T-cell (primary cell): ENCODE measurements at regions of chr19 and their contacts with region 1.

Region 1: GRCh38 chr19:39833464-39834286 is at the start of gene DYRK1B:
- DNase-seq: peak; percentile 95 to 99 (median 97)
- ATAC-seq: peak; percentile 91 to 93 (median 92)
- H3K4me3 ChIP-seq: peak within 1 kb of the TSS; percentile 76 to 99
- H3K4me3 Mint-ChIP-seq: peak within 1 kb of the TSS; percentile 75 to 84 (median 81)
- H3K27ac ChIP-seq: peak within 1 kb of the TSS; percentile 92
- H3K27ac Mint-ChIP-seq: peak within 1 kb of the TSS; percentile 85 to 92
- H3K4me1 ChIP-seq: peaks cover 11 to 44% of the 10 kb centered on the region in 2 experiments
- H3K4me1 Mint-ChIP-seq: peaks cover 30 to 36% (median 30%) of the 10 kb centered on the region in 3 donors
- H3K27me3 ChIP-seq: no peaks in the 10 kb centered on the region
- H3K27me3 Mint-ChIP-seq: no peaks in the 10 kb centered on the region
- total RNA-seq, gene DYRK1B: 18.9 to 38.4 (median 28.0) TPM

Region 2: GRCh38 chr19:38674388-38675171 is 1159.1 kb before region 1 on chr19:
- CTCF ChIA-PET with region 1: no interaction called
- POLR2A ChIA-PET with region 1: interaction called in 1 of 2 experiments, 11 read pairs
- DNase-seq: no peak
- ATAC-seq: no peak
- H3K4me3 ChIP-seq: no peak overlapping the region
- H3K4me3 Mint-ChIP-seq: peak overlapping the region in 1 of 3 donors; percentile 15
- H3K27ac ChIP-seq: no peak overlapping the region
- H3K27ac Mint-ChIP-seq: peak overlapping the region; percentile 51 to 60
- H3K4me1 ChIP-seq: peaks cover 11 to 67% of the 10 kb centered on the region in 2 experiments
- H3K4me1 Mint-ChIP-seq: peaks cover 67 to 84% (median 78%) of the 10 kb centered on the region in 3 donors
- H3K27me3 ChIP-seq: peaks cover 0 to 4% of the 10 kb centered on the region in 2 experiments
- H3K27me3 Mint-ChIP-seq: peaks cover 0 to 3% of the 10 kb centered on the region in 2 donors

Region 3: DNA sequence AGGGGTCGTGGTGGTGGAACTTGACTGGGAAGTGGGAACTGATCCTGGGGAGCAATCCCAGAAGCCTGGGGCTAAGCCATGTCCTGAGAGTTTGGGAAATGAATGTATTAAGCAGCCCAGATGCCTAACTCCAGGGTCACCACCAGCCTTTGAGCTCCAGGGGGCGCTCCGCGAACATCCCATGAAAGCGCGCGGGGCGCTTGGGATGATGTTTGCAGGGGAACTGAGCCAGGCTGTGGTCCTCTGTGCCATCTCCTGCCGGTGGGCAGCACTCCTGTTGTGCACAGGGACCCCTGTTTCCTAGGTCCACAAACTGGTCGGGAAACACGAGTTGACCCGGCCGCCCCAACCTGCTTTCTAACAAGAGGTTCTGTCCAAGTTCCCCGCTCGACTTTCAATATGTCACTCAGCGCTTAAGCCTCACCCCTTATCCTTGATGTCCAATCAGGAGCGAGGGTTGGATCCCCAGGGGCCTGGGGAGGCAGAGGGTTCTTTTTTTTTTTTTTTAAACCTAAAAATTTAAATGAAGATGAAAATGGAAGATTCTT is 40.6 kb before region 1 on chr19:
- CTCF ChIA-PET with region 1: interaction called in 1 of 2 experiments, 15 read pairs
- POLR2A ChIA-PET with region 1: interaction called in 1 of 2 experiments, 3 read pairs
- DNase-seq: peak; percentile 20 to 82 (median 64)
- ATAC-seq: peak; percentile 91 to 97 (median 93)
- H3K4me3 ChIP-seq: peak overlapping the region; percentile 55 to 66
- H3K4me3 Mint-ChIP-seq: peak overlapping the region; percentile 63 to 74 (median 66)
- H3K27ac ChIP-seq: no peak overlapping the region
- H3K27ac Mint-ChIP-seq: no peak overlapping the region
- H3K4me1 ChIP-seq: peaks cover 0 to 10% of the 10 kb centered on the region in 2 experiments
- H3K4me1 Mint-ChIP-seq: peaks cover 0 to 4% (median 0%) of the 10 kb centered on the region in 3 donors
- H3K27me3 ChIP-seq: no peaks in the 10 kb centered on the region
- H3K27me3 Mint-ChIP-seq: peaks cover 2 to 3% of the 10 kb centered on the region in 2 donors

Region 4: GRCh38 chr19:39805104-39805503 is 28.6 kb before region 1 on chr19:
- CTCF ChIA-PET with region 1: no interaction called
- POLR2A ChIA-PET with region 1: no interaction called
- DNase-seq: no peak
- ATAC-seq: no peak
- H3K4me3 ChIP-seq: no peak overlapping the region
- H3K4me3 Mint-ChIP-seq: no peak overlapping the region
- H3K27ac ChIP-seq: no peak overlapping the region
- H3K27ac Mint-ChIP-seq: no peak overlapping the region
- H3K4me1 ChIP-seq: no peaks in the 10 kb centered on the region
- H3K4me1 Mint-ChIP-seq: no peaks in the 10 kb centered on the region
- H3K27me3 ChIP-seq: peaks cover 2 to 14% of the 10 kb centered on the region in 2 experiments
- H3K27me3 Mint-ChIP-seq: peaks cover 11 to 16% of the 10 kb centered on the region in 2 donors

Region 5: GRCh38 chr19:39846176-39846677 is 12.6 kb after region 1 on chr19 and contains the start of gene FBL:
- CTCF ChIA-PET with region 1: interaction called in 1 of 2 experiments, 34 read pairs
- POLR2A ChIA-PET with region 1: interaction called in 1 of 2 experiments, 14 read pairs
- DNase-seq: peak; percentile 90 to 99 (median 96)
- ATAC-seq: peak; percentile 92 to 94 (median 94)
- H3K4me3 ChIP-seq: peak within 1 kb of the TSS; percentile 85 to 92
- H3K4me3 Mint-ChIP-seq: peak within 1 kb of the TSS; percentile 83 to 87 (median 87)
- H3K27ac ChIP-seq: peak within 1 kb of the TSS; percentile 92
- H3K27ac Mint-ChIP-seq: peak within 1 kb of the TSS; percentile 91 to 95
- H3K4me1 ChIP-seq: peaks cover 7 to 44% of the 10 kb centered on the region in 2 experiments
- H3K4me1 Mint-ChIP-seq: peaks cover 50 to 54% (median 53%) of the 10 kb centered on the region in 3 donors
- H3K27me3 ChIP-seq: no peaks in the 10 kb centered on the region
- H3K27me3 Mint-ChIP-seq: no peaks in the 10 kb centered on the region
- total RNA-seq, gene FBL: 291 to 348 (median 299) TPM

Region 6: DNA sequence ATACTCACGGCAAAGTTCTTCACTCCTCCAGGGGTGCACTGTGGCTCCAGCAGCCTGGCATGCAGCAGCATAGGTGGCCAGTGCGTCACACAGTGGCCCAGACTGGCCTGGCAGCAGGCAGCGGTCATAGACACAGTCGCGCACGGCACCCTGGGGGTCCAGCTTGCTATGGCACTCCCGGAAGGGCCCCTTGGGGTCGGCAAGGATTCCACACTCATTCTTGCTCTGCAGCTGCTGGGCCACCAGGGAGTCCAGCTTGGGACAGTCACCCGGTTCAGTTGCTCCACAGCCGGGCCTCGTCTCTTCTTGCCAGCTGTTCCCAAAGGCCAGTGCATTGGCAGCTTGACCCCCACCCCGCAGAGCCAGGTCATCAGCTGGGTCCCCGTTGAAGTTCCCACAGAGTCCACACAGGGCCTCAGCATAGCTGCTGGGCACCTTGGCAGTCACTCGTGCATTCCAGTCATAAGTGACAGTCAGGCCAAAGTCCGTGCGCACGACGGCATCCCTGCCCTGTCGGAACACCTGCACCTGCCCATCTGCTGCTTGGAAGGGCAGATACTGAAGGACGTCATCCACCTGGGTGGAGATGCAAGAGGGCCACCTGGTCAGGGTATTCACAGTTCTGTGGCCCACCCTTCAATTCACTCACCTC is 80.1 kb after region 1 on chr19:
- CTCF ChIA-PET with region 1: no interaction called
- POLR2A ChIA-PET with region 1: no interaction called
- DNase-seq: no peak
- ATAC-seq: no peak
- H3K4me3 ChIP-seq: no peak overlapping the region
- H3K4me3 Mint-ChIP-seq: no peak overlapping the region
- H3K27ac ChIP-seq: no peak overlapping the region
- H3K27ac Mint-ChIP-seq: no peak overlapping the region
- H3K4me1 ChIP-seq: peaks cover 0 to 16% of the 10 kb centered on the region in 2 experiments
- H3K4me1 Mint-ChIP-seq: peaks cover 16 to 33% (median 19%) of the 10 kb centered on the region in 3 donors
- H3K27me3 ChIP-seq: no peaks in the 10 kb centered on the region
- H3K27me3 Mint-ChIP-seq: no peaks in the 10 kb centered on the region